H1 (cell line): ENCODE measurements at regions of chr2 and their contacts with region 1.

Region 1: DNA sequence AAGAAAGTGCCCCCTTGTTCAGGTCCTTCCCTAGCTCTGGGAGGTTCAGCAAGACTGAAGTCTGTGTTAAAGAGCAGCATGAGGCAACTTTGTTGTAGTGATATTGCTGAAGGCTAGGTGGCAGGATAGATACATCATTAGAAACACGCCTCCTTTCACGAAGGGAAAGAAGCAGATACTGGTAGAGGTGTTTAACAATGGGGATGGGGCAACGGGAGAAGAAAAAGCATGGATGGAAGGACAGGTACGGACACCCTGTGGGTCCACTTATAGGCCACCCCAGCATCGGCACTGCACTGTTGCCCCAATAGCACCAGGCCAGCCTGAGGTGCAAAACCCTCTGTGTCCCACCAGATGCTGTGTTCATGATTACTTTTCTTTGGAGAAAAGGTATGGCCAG is 3.5 kb upstream of the IGFBP5 start:
- DNase-seq: no peak
- H3K4me3 ChIP-seq: no peak overlapping the region
- H3K27ac ChIP-seq: no peak overlapping the region
- H3K4me1 ChIP-seq: peaks cover 3 to 8% (median 6%) of the 10 kb centered on the region in 4 experiments
- H3K27me3 ChIP-seq: peaks cover 0 to 14% (median 12%) of the 10 kb centered on the region in 4 experiments; a peak in 5 of 7 replicates
- CTCF ChIP-seq: peak in 2 of 3 experiments; percentile 83 to 85; a peak in 3 of 4 replicates
- EP300 ChIP-seq: no peak
- POLR2A ChIP-seq: no peak
- RAD21 ChIP-seq: peak; percentile 93 to 94

Region 2: DNA sequence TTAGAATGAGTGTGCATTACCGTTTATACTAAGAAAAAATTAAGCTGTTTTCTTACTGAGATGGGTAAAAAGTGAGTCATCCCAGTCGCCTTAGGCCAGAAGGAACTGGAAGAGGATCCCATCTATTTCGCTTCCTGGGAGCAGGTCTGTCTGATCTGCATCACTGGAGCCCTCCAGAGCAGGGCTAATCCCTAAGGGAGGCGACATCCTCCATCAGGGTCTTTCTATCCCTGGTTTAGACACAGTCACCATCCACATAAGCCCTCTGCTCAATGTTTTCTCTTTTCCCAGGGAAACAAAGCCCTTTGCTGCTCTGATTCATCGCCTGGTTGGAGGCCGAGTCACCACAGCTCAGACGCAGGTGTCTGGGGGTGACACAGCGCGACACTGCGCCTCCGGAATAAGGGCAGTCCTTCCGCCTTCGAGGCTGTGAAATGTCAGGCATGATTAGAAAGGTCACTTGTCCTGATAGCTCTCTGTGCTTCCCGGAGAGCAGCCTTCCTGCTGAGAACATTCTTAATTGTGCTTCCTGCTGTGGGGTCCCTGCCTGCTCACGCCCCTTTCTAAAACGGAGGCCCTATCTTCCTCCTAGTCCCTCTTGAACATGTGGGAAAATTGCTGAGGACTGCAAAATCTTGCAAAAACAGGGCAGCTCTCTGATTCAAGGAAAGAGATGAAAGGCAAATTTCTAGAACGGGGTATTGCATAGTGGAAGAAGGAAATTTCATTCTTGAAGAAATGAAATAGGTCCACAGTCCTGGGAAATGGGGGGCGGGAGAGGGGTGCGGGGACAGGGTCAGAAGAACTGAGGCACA is 382.9 kb before region 1 on chr2:
- CTCF ChIA-PET with region 1: no interaction called
- POLR2A ChIA-PET with region 1: no interaction called
- DNase-seq: no peak
- H3K4me3 ChIP-seq: no peak overlapping the region
- H3K27ac ChIP-seq: no peak overlapping the region
- H3K4me1 ChIP-seq: peaks cover 3 to 16% (median 10%) of the 10 kb centered on the region in 4 experiments; a peak in 6 of 7 replicates
- H3K27me3 ChIP-seq: no peaks in the 10 kb centered on the region
- CTCF ChIP-seq: no peak
- EP300 ChIP-seq: no peak
- POLR2A ChIP-seq: no peak
- RAD21 ChIP-seq: no peak

Region 3: DNA sequence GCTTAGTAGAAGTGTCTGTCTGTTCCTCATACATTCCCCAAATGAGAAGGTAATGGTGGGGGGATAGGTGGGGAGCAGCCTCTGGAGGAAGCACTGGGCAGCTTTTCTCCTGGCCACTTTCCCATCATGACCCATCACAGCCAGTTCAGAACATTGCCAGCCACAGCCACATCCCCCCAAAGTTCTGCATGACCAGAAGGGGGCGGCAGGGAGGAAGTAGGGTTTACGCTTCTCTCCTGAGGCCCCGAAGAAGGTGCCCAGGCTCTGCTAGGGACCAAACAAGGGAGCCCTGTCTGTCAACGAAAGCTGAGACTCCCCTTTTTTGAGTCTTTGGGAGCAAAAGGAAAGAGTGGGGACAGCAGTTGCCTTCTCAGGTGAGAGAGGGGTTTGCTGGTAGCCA is 11.2 kb before region 1 on chr2:
- CTCF ChIA-PET with region 1: interaction called, 41 read pairs
- POLR2A ChIA-PET with region 1: interaction called, 3 read pairs
- DNase-seq: peak in 1 of 2 experiments; percentile 92
- H3K4me3 ChIP-seq: no peak overlapping the region
- H3K27ac ChIP-seq: no peak overlapping the region
- H3K4me1 ChIP-seq: peaks cover 9 to 18% (median 12%) of the 10 kb centered on the region in 4 experiments; a peak in 6 of 7 replicates
- H3K27me3 ChIP-seq: peaks cover 0 to 12% (median 4%) of the 10 kb centered on the region in 4 experiments; a peak in 5 of 7 replicates
- CTCF ChIP-seq: peak; percentile 89 to 92 (median 90)
- EP300 ChIP-seq: no peak
- POLR2A ChIP-seq: no peak
- RAD21 ChIP-seq: peak; percentile 65 to 81

Region 4: GRCh38 chr2:216720722-216721121 is 21.8 kb after region 1 on chr2:
- CTCF ChIA-PET with region 1: interaction called, 10 read pairs
- POLR2A ChIA-PET with region 1: interaction called, 4 read pairs
- DNase-seq: no peak
- H3K4me3 ChIP-seq: no peak overlapping the region
- H3K27ac ChIP-seq: no peak overlapping the region
- H3K4me1 ChIP-seq: peaks cover 0 to 2% (median 0%) of the 10 kb centered on the region in 4 experiments; a peak in 1 of 7 replicates
- H3K27me3 ChIP-seq: no peaks in the 10 kb centered on the region
- CTCF ChIP-seq: no peak
- EP300 ChIP-seq: no peak
- POLR2A ChIP-seq: no peak
- RAD21 ChIP-seq: no peak

Region 5: DNA sequence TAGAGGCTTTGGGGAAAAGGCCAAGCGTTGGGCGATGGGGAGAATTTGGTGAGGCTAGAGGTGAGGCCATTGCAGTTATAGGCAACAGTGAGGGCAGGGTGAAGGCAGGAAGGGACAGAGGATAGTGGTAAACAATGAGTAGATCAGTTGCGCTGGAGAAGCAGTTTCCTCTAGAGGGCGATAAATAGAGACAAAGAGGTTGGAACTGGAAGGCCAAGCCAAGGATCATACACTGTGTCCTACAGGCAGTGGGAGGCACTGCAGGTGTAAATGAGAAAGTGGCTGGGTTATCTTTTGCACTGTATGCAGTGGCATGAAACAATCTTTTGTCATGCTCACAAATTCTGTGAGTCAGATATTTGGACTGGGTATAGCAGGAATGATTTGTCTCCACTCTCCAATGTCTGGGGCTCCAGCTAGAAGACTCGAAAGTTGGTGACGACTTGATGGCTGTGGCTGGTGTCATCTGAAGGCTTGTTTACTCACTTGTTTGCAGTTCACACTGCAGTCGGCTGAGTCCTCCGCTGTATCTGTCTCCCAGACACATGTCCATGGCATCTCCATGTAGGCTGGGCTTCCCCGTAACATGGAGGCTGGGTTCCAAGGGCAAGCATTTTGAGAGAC is 78.9 kb after region 1 on chr2:
- CTCF ChIA-PET with region 1: interaction called, 32 read pairs
- POLR2A ChIA-PET with region 1: no interaction called
- DNase-seq: peak; percentile 58
- H3K4me3 ChIP-seq: no peak overlapping the region
- H3K27ac ChIP-seq: no peak overlapping the region
- H3K4me1 ChIP-seq: peaks cover 0 to 3% (median 0%) of the 10 kb centered on the region in 4 experiments; a peak in 3 of 7 replicates
- H3K27me3 ChIP-seq: no peaks in the 10 kb centered on the region
- CTCF ChIP-seq: peak; percentile 61 to 100 (median 99)
- EP300 ChIP-seq: no peak
- POLR2A ChIP-seq: no peak
- RAD21 ChIP-seq: peak; percentile 87

Region 6: DNA sequence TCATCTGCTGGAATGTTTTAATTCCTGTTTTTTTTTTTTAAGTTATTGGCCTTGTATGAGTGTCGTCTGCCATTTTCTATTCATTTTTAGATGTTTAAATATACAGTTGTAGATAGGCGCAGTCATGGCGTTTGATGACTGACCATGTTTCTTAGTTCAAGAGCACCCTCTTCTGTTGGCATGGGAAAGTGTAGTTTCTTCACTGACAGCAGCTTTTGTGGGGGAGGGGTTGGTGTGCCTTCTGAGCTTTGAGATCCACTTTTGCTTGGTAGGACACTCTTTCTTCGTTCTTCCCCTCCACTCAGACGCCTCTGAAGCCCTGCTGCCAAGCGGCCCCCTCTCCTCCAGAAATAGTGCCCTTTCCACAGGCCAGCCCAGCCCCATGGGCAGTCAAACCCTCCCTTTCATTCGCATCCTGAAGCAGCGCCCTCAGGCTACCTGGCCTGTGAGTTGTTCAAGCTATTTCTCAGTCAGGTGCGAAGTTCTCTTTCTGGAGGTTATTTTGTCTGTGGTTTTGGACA is 811.9 kb after region 1 on chr2:
- CTCF ChIA-PET with region 1: interaction called, 13 read pairs
- POLR2A ChIA-PET with region 1: no interaction called
- DNase-seq: peak; percentile 15 to 65
- H3K4me3 ChIP-seq: peak overlapping the region in 1 of 4 experiments; percentile 33; a peak in 3 of 8 replicates
- H3K27ac ChIP-seq: no peak overlapping the region
- H3K4me1 ChIP-seq: peaks cover 0 to 3% (median 2%) of the 10 kb centered on the region in 4 experiments; a peak in 3 of 7 replicates
- H3K27me3 ChIP-seq: no peaks in the 10 kb centered on the region
- CTCF ChIP-seq: peak; percentile 45 to 82 (median 79)
- EP300 ChIP-seq: no peak
- POLR2A ChIP-seq: no peak
- RAD21 ChIP-seq: peak; percentile 97 to 98